Activated T-helper 2 cell treated with anti-CD3 and anti-CD28 coated beads, Interferon-gamma antibody, Interleukin-2, Interleukin-4, amounts not matched to agents 10 μg/mL and 5 μg/mL and 100 μg/mL, durations not matched to agents 14 hours and 24 hours and 36 hours (primary cell): ENCODE measurements at regions of chr16 and their contacts with region 1.

Region 1: GRCh38 chr16:3879887-3880564 is 487 bp downstream of the CREBBP start:
- DNase-seq: peak; percentile 63
- H3K4me3 Mint-ChIP-seq: peak overlapping the region; percentile 88
- H3K27ac Mint-ChIP-seq: no peak overlapping the region
- H3K4me1 Mint-ChIP-seq: peaks cover 35% of the 10 kb centered on the region
- H3K27me3 Mint-ChIP-seq: peaks cover 7% of the 10 kb centered on the region

Region 2: DNA sequence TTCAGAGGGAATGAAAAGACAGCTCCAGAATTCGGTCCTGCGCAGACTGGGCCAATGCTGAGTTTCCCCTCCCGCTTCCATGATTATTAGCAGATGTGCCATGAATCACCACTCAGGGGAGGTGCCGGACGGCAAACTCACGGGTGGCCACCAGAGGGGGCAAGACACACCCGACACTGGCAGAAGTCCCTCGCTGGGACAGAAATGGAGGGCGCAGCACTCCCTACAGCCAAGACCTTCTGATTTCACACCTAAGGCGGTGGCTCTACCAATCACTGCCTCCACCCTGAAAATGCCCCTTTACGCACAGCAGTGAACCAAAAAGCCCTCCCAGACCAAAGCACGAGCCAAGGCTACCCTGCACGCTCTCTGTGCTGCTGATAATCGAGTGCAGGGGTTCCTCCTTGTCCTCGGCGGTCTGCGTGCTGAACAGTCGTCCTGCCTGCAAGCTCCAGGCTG is 189.5 kb before region 1 on chr16:
- intact Hi-C with region 1: loop called (anchors 1 kb)
- DNase-seq: peak; percentile 74
- H3K4me3 Mint-ChIP-seq: no peak overlapping the region
- H3K27ac Mint-ChIP-seq: no peak overlapping the region
- H3K4me1 Mint-ChIP-seq: peaks cover 6% of the 10 kb centered on the region
- H3K27me3 Mint-ChIP-seq: no peaks in the 10 kb centered on the region

Region 3: GRCh38 chr16:3797904-3798811 is 81.9 kb before region 1 on chr16:
- intact Hi-C with region 1: loop called (anchors 5 kb)
- DNase-seq: no peak
- H3K4me3 Mint-ChIP-seq: peak overlapping the region; percentile 33
- H3K27ac Mint-ChIP-seq: no peak overlapping the region
- H3K4me1 Mint-ChIP-seq: peaks cover 50% of the 10 kb centered on the region
- H3K27me3 Mint-ChIP-seq: peaks cover 10% of the 10 kb centered on the region

Region 4: GRCh38 chr16:3857189-3858043 is 22.6 kb before region 1 on chr16:
- intact Hi-C with region 1: loop called (anchors 2 kb)
- DNase-seq: no peak
- H3K4me3 Mint-ChIP-seq: no peak overlapping the region
- H3K27ac Mint-ChIP-seq: peak overlapping the region; percentile 7
- H3K4me1 Mint-ChIP-seq: peaks cover 38% of the 10 kb centered on the region
- H3K27me3 Mint-ChIP-seq: no peaks in the 10 kb centered on the region